CD4-positive, alpha-beta T cell (primary cell): ENCODE measurements at regions of chr5 and their contacts with region 1.

Region 1: GRCh38 chr5:119315516-119315949 is 40.3 kb upstream of the TNFAIP8 start:
- DNase-seq: peak in 10 of 14 experiments; percentile 42 to 85 (median 54)
- ATAC-seq: peak; percentile 87
- H3K4me3 ChIP-seq: no peak overlapping the region
- H3K4me3 Mint-ChIP-seq: peak overlapping the region; percentile 59
- H3K27ac ChIP-seq: peak overlapping the region; percentile 43 to 61
- H3K27ac Mint-ChIP-seq: peak overlapping the region; percentile 95
- H3K4me1 ChIP-seq: peaks cover 80% of the 10 kb centered on the region
- H3K4me1 Mint-ChIP-seq: peaks cover 92% of the 10 kb centered on the region
- H3K27me3 ChIP-seq: no peaks in the 10 kb centered on the region
- H3K27me3 Mint-ChIP-seq: no peaks in the 10 kb centered on the region
- CTCF ChIP-seq: peak; percentile 65

Region 2: DNA sequence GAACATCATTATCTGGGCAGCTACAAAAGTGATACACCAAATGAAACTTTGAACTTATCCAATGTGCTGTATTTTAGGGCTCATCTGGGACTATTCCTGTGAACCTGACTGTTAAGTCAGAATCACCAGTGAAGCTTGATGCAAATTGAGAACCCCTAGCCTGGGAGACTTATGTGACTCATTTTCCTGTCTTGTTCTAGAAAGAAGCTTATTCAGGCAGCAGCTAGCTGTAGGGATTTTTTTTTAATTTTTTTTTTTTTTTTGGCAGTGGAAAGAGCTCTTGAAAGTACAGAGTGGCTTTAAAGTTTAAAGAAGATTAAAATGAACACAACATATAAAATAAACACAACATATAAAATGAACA is 40.8 kb before region 1 on chr5:
- CTCF ChIA-PET with region 1: interaction called, 10 read pairs
- POLR2A ChIA-PET with region 1: interaction called, 30 read pairs
- intact Hi-C with region 1: no loop called
- DNase-seq: peak in 4 of 14 experiments; percentile 44 to 81 (median 70)
- ATAC-seq: peak; percentile 38
- H3K4me3 ChIP-seq: peak overlapping the region; percentile 69
- H3K4me3 Mint-ChIP-seq: peak overlapping the region; percentile 99
- H3K27ac ChIP-seq: peak overlapping the region; percentile 67 to 84
- H3K27ac Mint-ChIP-seq: peak overlapping the region; percentile 97
- H3K4me1 ChIP-seq: peaks cover 84% of the 10 kb centered on the region
- H3K4me1 Mint-ChIP-seq: peaks cover 96% of the 10 kb centered on the region
- H3K27me3 ChIP-seq: no peaks in the 10 kb centered on the region
- H3K27me3 Mint-ChIP-seq: peaks cover 6% of the 10 kb centered on the region
- CTCF ChIP-seq: no peak

Region 3: GRCh38 chr5:119302916-119303897 is 12.3 kb before region 1 on chr5:
- CTCF ChIA-PET with region 1: interaction called, 9 read pairs
- POLR2A ChIA-PET with region 1: interaction called, 25 read pairs
- intact Hi-C with region 1: no loop called
- DNase-seq: peak in 2 of 14 experiments; percentile 56 to 58
- ATAC-seq: peak; percentile 76
- H3K4me3 ChIP-seq: no peak overlapping the region
- H3K4me3 Mint-ChIP-seq: peak overlapping the region; percentile 73
- H3K27ac ChIP-seq: peak overlapping the region; percentile 54 to 72
- H3K27ac Mint-ChIP-seq: peak overlapping the region; percentile 95
- H3K4me1 ChIP-seq: peaks cover 59% of the 10 kb centered on the region
- H3K4me1 Mint-ChIP-seq: peaks cover 96% of the 10 kb centered on the region
- H3K27me3 ChIP-seq: no peaks in the 10 kb centered on the region
- H3K27me3 Mint-ChIP-seq: no peaks in the 10 kb centered on the region
- CTCF ChIP-seq: no peak

Region 4: GRCh38 chr5:119335261-119335677 is 19.7 kb after region 1 on chr5:
- CTCF ChIA-PET with region 1: interaction called, 28 read pairs
- POLR2A ChIA-PET with region 1: interaction called, 31 read pairs
- intact Hi-C with region 1: no loop called
- DNase-seq: no peak
- ATAC-seq: no peak
- H3K4me3 ChIP-seq: peak overlapping the region; percentile 68
- H3K4me3 Mint-ChIP-seq: peak overlapping the region; percentile 86
- H3K27ac ChIP-seq: peak overlapping the region; percentile 77 to 83
- H3K27ac Mint-ChIP-seq: peak overlapping the region; percentile 97
- H3K4me1 ChIP-seq: peaks cover 82% of the 10 kb centered on the region
- H3K4me1 Mint-ChIP-seq: peaks cover 96% of the 10 kb centered on the region
- H3K27me3 ChIP-seq: no peaks in the 10 kb centered on the region
- H3K27me3 Mint-ChIP-seq: no peaks in the 10 kb centered on the region
- CTCF ChIP-seq: no peak

Region 5: DNA sequence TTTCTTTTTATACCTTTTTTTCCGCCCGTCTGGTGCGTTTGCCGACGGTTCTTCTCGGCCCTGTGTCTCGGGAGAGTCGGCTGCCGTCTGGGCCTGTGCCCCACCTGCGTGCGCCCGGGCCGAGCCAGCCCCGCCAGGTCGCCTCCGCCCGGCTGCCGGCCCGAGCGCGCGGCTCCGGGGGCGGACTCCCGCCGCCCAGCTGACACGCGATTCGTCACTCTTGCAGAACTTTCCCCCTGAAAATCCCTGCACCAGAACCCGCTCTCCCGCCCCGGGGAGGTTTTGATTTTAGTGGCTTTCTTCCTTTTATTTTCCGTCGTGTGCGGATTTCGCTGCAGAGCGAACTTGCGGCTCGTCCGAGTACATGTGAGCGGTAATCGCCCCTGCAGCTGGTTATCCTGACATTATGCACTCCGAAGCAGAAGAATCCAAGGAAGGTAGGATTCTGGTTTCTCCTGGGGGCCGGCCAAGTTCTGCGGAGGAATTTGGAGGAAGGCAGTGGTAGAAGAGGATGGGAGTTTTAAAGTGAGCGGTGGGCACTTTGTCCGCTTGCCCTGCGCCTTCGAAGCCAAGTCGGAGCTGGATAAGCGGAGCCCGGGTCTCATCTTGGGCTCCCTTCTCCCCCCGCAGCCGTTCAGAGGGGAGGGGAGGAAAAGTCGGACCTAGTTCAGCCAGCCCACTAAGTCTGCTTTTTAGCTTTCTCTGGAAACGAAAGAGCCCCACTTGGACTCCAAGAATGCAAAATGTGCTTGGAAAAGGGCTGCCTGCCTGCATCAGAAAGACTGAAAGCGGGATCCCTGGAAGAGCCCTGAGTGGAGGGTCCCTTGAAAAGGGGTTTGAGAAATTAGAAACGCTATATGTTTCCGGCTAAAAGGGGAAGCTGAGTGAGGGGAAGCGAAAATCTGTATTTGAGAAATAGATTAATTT is 40.4 kb after region 1 on chr5 and contains the start of gene TNFAIP8:
- CTCF ChIA-PET with region 1: interaction called, 13 read pairs
- POLR2A ChIA-PET with region 1: interaction called, 14 read pairs
- intact Hi-C with region 1: loop called (anchors 5 kb)
- DNase-seq: peak in 6 of 14 experiments; percentile 28 to 81 (median 58)
- ATAC-seq: peak; percentile 37
- H3K4me3 ChIP-seq: peak within 1 kb of the TSS; percentile 61
- H3K4me3 Mint-ChIP-seq: peak within 1 kb of the TSS; percentile 93
- H3K27ac ChIP-seq: peak within 1 kb of the TSS; percentile 63 to 76
- H3K27ac Mint-ChIP-seq: peak within 1 kb of the TSS; percentile 86
- H3K4me1 ChIP-seq: peaks cover 89% of the 10 kb centered on the region
- H3K4me1 Mint-ChIP-seq: peaks cover 97% of the 10 kb centered on the region
- H3K27me3 ChIP-seq: no peaks in the 10 kb centered on the region
- H3K27me3 Mint-ChIP-seq: no peaks in the 10 kb centered on the region
- CTCF ChIP-seq: no peak
- total RNA-seq, gene TNFAIP8: 106 to 114 TPM

Region 6: DNA sequence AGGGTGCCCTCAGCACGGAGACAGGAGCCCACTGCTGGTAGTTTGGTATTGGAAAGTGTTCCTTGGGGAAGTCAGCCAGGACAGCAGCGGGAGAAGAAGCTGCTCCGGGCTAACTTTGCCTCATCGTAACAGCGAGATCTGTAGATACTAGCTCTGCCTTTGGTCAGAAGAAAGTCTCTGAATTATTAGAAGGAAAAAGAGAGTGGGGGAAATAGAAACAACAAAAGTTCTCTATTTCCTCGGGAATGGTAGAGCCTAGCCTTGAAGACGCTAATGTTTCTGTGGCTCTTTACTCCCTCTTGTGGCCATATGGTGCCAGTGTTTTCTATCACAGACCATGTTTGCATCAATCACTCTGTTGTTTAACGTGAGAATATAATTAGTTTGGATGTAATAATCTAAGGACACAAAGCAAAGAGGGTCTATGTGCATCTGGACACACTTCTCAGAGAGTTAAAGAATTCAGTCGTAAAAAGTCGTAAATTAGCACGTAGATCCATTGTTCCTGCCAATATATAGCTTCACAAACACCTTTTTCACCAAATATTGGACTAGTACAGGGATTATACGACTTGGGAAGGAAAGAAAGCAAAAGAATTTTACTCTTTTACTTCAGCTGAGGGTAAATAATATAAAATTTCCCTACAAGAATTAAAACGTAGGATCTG is 96.5 kb after region 1 on chr5:
- CTCF ChIA-PET with region 1: interaction called, 35 read pairs
- POLR2A ChIA-PET with region 1: interaction called, 10 read pairs
- intact Hi-C with region 1: loop called (anchors 1 to 2 kb)
- DNase-seq: peak in 13 of 14 experiments; percentile 11 to 87 (median 43)
- ATAC-seq: peak; percentile 94
- H3K4me3 ChIP-seq: peak overlapping the region; percentile 62
- H3K4me3 Mint-ChIP-seq: peak overlapping the region; percentile 85
- H3K27ac ChIP-seq: no peak overlapping the region
- H3K27ac Mint-ChIP-seq: peak overlapping the region; percentile 31
- H3K4me1 ChIP-seq: peaks cover 8% of the 10 kb centered on the region
- H3K4me1 Mint-ChIP-seq: peaks cover 20% of the 10 kb centered on the region
- H3K27me3 ChIP-seq: no peaks in the 10 kb centered on the region
- H3K27me3 Mint-ChIP-seq: no peaks in the 10 kb centered on the region
- CTCF ChIP-seq: peak; percentile 92